ENCODE measurements at regions of chr12 and their contacts with region 1.

Region 1: GRCh38 chr12:56041552-56042429 is at the start of gene RPS26:
- DNase-seq: peak; percentile 97 to 99
- H3K4me3 ChIP-seq: peak within 1 kb of the TSS; percentile 95
- H3K4me1 ChIP-seq: peaks cover 24% of the 10 kb centered on the region
- H3K27me3 ChIP-seq: no peaks in the 10 kb centered on the region

Region 2: DNA sequence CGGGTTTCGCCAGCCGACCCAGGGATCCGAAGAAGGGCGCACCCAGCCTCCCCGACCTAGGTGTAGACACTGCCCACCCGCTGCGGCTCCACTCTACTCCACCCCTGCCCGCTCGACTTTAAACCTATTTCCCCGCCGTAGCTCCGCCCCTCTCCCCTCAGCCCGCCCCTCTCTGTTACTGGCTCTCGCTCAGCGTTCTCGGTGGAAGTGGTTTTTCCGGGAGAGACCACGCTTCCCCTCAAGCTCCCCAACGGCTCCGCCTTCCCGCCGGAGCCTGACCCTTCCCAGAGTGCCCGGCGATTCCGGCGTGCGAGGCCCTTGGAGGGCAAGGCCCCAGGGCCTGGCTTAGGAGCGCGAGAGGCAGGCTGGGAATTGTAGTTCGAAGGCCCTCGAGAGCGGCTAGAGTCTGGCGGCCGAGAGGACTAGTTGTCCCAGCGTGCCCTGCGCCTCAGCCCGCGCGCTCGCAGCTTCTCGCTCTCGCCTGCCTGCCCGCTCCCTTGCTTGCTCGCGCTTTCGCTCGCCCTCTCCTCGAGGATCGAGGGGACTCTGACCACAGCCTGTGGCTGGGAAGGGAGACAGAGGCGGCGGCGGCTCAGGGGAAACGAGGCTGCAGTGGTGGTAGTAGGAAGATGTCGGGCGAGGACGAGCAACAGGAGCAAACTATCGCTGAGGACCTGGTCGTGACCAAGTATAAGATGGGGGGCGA is 62.5 kb after region 1 on chr12 and contains the start of gene PA2G4:
- in situ Hi-C with region 1: loop called (anchors 10 kb)
- DNase-seq: peak; percentile 98 to 99
- H3K4me3 ChIP-seq: peak within 1 kb of the TSS; percentile 89
- H3K4me1 ChIP-seq: peaks cover 16% of the 10 kb centered on the region; the same call in 1 of the 2 replicates
- H3K27me3 ChIP-seq: no peaks in the 10 kb centered on the region